ENCODE measurements at regions of chr1 and their contacts with region 1.

Region 1: GRCh38 chr1:183281553-183282091 is 95.6 kb downstream of the LAMC2 start:
- H3K4me3 ChIP-seq: no peak overlapping the region
- H3K27ac ChIP-seq: no peak overlapping the region
- H3K4me1 ChIP-seq: peaks cover 2% of the 10 kb centered on the region; the same call in 1 of the 2 replicates
- CTCF ChIP-seq: peak; percentile 75

Region 2: DNA sequence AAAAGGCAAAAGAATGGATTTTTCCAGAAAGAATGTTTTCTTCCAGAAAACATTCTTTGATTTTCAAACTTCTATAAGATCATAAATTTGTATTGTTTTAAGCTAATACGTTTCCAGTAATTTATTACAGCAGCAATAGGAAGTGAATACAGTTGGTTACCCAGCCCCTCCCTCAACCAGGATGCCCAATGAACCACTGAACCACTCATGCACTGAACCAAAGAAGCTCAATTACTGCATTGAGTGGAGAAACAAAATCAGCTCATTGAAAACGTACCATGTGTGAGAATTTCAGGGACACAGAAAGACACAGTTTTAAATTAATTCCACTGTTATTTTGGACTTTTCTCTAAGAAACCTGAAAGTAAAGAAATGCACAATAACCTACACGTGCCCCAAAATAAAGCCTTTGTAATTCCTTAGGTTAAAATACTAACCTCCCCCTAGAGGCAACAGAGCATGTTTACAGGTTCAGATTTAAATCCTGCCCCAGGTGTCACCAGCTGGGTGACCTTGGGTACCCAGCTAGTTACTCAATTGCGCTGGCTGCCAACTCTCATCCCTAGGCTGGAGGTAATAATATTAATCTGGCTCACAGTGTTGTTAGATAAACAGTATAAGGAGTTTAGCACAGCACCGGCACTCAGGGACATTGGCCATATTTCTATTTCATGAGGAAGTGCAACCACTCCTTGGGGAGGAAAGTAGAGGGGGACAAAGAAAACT is 24.9 kb after region 1 on chr1:
- CTCF ChIA-PET with region 1: interaction called, 12 read pairs
- POLR2A ChIA-PET with region 1: no interaction called
- H3K4me3 ChIP-seq: no peak overlapping the region
- H3K27ac ChIP-seq: no peak overlapping the region
- H3K4me1 ChIP-seq: peaks cover 6% of the 10 kb centered on the region; the same call in 1 of the 2 replicates
- CTCF ChIP-seq: no peak

Region 3: GRCh38 chr1:183622884-183623785 is 341.5 kb after region 1 on chr1:
- CTCF ChIA-PET with region 1: interaction called, 13 read pairs
- POLR2A ChIA-PET with region 1: no interaction called
- H3K4me3 ChIP-seq: no peak overlapping the region
- H3K27ac ChIP-seq: no peak overlapping the region
- H3K4me1 ChIP-seq: no peaks in the 10 kb centered on the region
- CTCF ChIP-seq: peak; percentile 79

Measured in HEK293 (cell line).